ENCODE measurements at regions of chr15 and their contacts with region 1.

Region 1: GRCh38 chr15:66497502-66498455 is at the start of gene SNAPC5:
- DNase-seq: peak; percentile 90
- H3K27ac ChIP-seq: peak within 1 kb of the TSS; percentile 82
- CTCF ChIP-seq: peak; percentile 99

Region 2: DNA sequence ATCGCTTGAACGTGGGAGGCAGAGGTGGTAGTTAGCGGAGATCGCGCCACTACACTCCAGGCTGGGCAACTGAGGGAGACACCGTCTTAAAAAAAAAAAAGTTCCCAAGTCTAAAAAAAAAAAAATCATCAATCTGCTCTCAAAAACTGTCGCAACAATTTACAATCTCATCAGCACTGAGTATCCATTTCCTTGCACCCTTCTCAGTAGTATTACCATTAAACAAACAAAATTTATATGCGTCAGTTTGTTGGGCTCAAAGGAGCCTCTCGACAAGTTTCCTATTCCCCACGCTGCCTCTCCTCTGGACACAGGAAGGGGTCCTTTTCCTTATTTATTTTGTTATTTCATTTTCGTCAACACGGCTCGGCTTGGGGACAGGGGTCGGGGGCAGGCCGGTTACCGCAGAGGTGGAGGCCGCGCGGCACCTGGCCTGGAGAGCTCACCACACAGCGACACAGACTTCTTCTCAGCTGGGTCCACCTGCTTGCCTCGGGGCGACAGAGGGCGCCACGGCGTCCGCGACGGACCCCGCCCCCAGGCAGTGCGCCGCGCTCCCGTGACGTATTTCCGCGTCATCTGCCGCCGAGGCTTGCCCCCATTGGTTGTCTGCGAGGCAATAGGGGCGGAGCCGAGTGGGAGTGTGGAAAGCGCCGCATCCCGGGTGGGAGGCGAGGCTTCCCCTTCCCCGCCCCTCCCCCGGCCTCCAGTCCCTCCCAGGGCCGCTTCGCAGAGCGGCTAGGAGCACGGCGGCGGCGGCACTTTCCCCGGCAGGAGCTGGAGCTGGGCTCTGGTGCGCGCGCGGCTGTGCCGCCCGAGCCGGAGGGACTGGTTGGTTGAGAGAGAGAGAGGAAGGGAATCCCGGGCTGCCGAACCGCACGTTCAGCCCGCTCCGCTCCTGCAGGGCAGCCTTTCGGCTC is 111.3 kb before region 1 on chr15 and contains the start of gene MAP2K1:
- CTCF ChIA-PET with region 1: interaction called, 31 read pairs
- POLR2A ChIA-PET with region 1: interaction called, 4 read pairs
- DNase-seq: peak; percentile 99
- H3K27ac ChIP-seq: peak within 1 kb of the TSS; percentile 85
- CTCF ChIP-seq: peak; percentile 88